ENCODE measurements at regions of chr6 and their contacts with region 1.

Region 1: DNA sequence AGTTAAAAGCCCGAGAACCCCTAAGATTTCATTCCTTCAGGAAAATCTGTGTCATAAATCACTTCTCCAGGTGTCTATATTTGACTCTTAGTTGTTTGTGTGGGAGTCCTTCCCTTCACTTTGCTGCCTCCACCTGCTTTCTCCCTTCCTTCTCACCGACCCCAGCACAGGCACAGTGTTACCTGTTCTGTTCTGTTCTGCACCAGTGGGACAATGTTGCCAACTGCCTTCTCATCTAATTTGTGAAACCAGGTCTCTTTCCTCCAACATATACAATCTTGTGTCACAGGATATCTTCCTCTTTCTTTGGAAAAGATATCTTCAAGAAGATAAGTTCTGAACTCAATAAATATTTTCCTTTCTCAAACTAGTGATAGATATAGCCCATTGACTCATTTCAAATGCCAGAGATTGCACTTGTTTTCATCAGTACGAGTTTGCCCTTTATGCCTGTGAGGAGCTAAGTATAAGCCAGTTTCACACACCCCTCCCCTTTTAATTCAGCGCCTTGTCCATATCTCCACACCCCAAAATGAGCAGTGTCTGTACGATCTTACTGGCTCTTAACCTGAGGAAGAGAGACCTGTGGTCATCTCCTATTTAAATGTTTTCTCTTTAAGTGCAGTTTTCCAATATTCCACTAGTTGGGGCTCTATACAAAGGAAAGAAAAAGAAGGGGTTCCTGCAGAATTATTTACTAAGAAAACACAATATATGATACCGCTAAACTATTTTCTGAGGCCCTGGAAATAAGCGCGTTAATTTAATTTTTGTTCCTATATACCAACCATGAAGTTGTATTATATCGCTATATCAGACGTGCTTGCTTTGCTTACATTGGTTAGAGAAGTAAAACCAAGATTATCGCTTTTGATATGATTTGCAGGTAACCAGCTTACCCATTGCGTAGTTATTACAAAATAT is 81.6 kb upstream of the PREP start:
- DNase-seq: peak in 3 of 14 experiments; percentile 50 to 61 (median 56)
- ATAC-seq: peak; percentile 32
- H3K4me3 ChIP-seq: no peak overlapping the region
- H3K4me3 Mint-ChIP-seq: no peak overlapping the region
- H3K27ac ChIP-seq: no peak overlapping the region
- H3K27ac Mint-ChIP-seq: no peak overlapping the region
- H3K4me1 ChIP-seq: no peaks in the 10 kb centered on the region
- H3K4me1 Mint-ChIP-seq: peaks cover 5% of the 10 kb centered on the region
- H3K27me3 ChIP-seq: no peaks in the 10 kb centered on the region
- H3K27me3 Mint-ChIP-seq: peaks cover 20% of the 10 kb centered on the region
- CTCF ChIP-seq: peak; percentile 75

Region 2: DNA sequence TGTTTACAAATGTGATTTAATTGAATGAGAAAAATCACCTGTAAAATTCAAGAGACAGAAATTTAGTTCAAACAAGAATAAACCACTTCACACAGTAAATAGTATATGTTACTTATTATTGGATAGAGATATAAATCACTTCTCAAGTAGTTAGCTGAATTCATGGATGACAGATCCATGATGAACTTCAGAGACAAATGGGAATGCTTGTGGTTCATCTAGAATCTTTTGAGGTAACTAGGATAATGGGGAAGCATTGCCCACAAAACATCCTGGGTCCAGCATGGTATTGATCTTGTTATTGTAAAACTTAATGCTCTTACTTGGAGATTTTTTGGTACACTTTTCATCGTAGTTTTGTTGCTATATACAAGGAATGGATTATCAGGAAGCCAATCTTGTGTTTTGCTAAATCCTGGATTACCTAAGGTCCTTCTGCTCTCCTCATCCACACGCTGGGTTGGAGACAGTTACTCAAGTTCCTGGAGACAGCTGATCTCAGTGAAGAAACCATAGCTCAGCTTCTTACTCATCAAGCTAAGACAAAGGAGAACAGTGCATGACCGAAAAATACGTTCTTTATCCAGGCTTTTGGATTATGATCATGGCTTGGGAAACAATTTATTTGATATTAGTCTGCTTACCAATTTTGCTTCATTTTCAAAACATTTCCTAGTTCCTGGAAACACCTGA is 60.9 kb after region 1 on chr6:
- CTCF ChIA-PET with region 1: no interaction called
- POLR2A ChIA-PET with region 1: no interaction called
- intact Hi-C with region 1: no loop called
- DNase-seq: no peak
- ATAC-seq: no peak
- H3K4me3 ChIP-seq: no peak overlapping the region
- H3K4me3 Mint-ChIP-seq: no peak overlapping the region
- H3K27ac ChIP-seq: no peak overlapping the region
- H3K27ac Mint-ChIP-seq: no peak overlapping the region
- H3K4me1 ChIP-seq: no peaks in the 10 kb centered on the region
- H3K4me1 Mint-ChIP-seq: no peaks in the 10 kb centered on the region
- H3K27me3 ChIP-seq: no peaks in the 10 kb centered on the region
- H3K27me3 Mint-ChIP-seq: peaks cover 10% of the 10 kb centered on the region
- CTCF ChIP-seq: no peak

Region 3: DNA sequence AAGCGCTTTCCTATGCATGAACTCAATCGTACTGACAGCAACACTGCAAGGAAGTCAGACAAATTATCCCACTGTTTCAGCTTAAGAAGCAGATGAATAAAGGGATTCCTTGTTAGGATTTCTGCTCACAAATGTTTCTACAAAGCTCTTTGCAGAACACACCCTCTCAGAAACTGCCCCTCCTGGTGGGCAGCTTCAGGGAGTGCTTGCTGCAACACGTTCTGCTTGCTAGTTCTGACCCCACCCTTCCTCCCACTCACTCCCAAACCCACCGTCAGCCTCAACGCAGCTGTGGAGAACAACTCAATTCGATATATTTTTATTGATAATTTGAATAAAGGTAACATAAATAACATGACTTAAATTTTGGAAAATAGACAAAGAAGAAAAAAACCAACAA is 350.9 kb after region 1 on chr6:
- CTCF ChIA-PET with region 1: no interaction called
- POLR2A ChIA-PET with region 1: no interaction called
- intact Hi-C with region 1: no loop called
- DNase-seq: peak in 5 of 14 experiments; percentile 5 to 40 (median 20)
- ATAC-seq: no peak
- H3K4me3 ChIP-seq: no peak overlapping the region
- H3K4me3 Mint-ChIP-seq: no peak overlapping the region
- H3K27ac ChIP-seq: no peak overlapping the region
- H3K27ac Mint-ChIP-seq: no peak overlapping the region
- H3K4me1 ChIP-seq: no peaks in the 10 kb centered on the region
- H3K4me1 Mint-ChIP-seq: no peaks in the 10 kb centered on the region
- H3K27me3 ChIP-seq: no peaks in the 10 kb centered on the region
- H3K27me3 Mint-ChIP-seq: no peaks in the 10 kb centered on the region
- CTCF ChIP-seq: no peak

Region 4: DNA sequence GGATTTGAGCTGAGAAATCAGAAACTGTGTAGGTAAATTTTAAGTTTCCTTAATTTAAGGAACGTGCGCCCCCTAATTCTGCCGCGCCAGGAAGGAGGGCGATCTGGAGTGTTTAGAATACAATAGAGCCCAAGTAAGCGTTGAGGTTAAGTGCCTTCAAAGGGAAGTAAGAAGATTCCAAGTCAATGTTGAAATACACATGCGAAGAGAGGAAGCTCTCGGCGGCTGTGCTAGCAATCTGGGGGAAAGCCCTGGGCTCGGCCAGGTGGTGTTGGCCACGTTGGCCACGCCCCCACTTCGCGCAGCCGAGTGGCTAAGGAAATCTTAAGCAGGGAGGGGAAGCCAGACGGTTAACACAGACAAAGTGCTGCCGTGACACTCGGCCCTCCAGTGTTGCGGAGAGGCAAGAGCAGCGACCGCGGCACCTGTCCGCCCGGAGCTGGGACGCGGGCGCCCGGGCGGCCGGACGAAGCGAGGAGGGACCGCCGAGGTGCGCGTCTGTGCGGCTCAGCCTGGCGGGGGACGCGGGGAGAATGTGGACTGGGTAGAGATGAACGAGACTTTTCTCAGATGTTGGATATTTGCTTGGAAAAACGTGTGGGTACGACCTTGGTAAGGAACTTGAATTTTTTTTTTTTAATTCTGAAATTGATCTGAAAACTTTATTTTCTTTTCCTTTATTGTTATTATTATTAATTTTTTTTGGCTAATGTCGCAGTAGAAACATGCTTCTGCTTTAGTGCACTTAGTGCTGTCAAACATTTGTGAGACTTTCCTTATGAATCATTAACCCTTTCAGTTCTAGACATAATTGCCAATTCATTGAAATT is 601.7 kb after region 1 on chr6 and contains the start of gene PRDM1:
- CTCF ChIA-PET with region 1: no interaction called
- POLR2A ChIA-PET with region 1: no interaction called
- intact Hi-C with region 1: loop called (anchors 10 kb)
- DNase-seq: peak; percentile 53 to 96 (median 68)
- ATAC-seq: peak; percentile 83
- H3K4me3 ChIP-seq: peak within 1 kb of the TSS; percentile 62
- H3K4me3 Mint-ChIP-seq: peak within 1 kb of the TSS; percentile 94
- H3K27ac ChIP-seq: peak within 1 kb of the TSS in 1 of 2 donors; percentile 49
- H3K27ac Mint-ChIP-seq: peak within 1 kb of the TSS; percentile 74
- H3K4me1 ChIP-seq: peaks cover 58% of the 10 kb centered on the region
- H3K4me1 Mint-ChIP-seq: peaks cover 80% of the 10 kb centered on the region
- H3K27me3 ChIP-seq: peaks cover 0 to 8% of the 10 kb centered on the region in 2 experiments
- H3K27me3 Mint-ChIP-seq: peaks cover 55% of the 10 kb centered on the region
- CTCF ChIP-seq: peak; percentile 14
- total RNA-seq, gene PRDM1: 69.9 to 83.4 TPM